Activated B cell treated with CpG ODN at 0.5 μM for 24 hours (primary cell): ENCODE measurements at regions of chr9 and their contacts with region 1.

Region 1: DNA sequence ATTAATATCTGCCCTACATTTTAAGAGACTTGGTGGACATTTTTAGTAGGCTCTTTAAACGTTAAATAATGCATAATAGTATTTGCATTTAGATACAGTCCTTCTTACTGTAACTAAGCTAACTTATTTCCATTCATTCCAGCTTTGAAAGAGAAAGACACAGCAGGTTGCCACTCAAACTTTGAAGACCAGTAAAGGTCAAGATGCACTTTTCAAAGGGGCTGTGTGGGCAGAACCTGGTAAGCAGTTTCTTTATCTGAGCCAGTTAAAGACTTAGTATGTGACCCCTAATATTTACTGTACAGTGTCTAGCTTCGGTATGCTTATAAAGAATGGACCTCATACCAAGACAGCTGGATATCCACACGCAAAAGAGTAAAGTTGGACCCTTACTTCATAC is 20.8 kb downstream of the PLGRKT start:
- DNase-seq: no peak
- ATAC-seq: no peak
- H3K4me3 Mint-ChIP-seq: no peak overlapping the region
- H3K27ac Mint-ChIP-seq: no peak overlapping the region
- H3K4me1 Mint-ChIP-seq: peaks cover 12% of the 10 kb centered on the region
- H3K27me3 Mint-ChIP-seq: no peaks in the 10 kb centered on the region
- CTCF ChIP-seq: no peak

Region 2: DNA sequence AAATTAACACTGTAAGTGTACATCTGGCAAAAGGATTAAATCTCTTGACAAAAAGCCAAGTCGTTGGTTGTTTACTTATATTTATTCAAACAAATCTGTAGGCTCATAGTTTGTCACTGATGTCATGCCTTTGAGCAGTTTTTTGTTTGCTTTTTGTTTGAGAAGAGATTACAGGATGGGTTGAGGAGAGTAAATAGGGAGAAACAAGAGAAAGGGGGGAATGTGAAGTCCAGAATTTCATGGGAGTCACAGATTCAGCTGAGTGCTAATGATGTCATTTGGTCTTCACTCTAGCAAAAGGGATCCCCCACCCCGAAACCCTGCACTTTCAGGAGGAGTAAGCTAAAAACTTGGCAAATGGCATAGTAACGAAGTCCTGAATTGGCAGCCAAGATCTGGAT is 1454.5 kb before region 1 on chr9:
- CTCF ChIA-PET with region 1: no interaction called
- POLR2A ChIA-PET with region 1: no interaction called
- intact Hi-C with region 1: no loop called
- DNase-seq: no peak
- ATAC-seq: no peak
- H3K4me3 Mint-ChIP-seq: no peak overlapping the region
- H3K27ac Mint-ChIP-seq: no peak overlapping the region
- H3K4me1 Mint-ChIP-seq: no peaks in the 10 kb centered on the region
- H3K27me3 Mint-ChIP-seq: peaks cover 10% of the 10 kb centered on the region
- CTCF ChIP-seq: no peak

Region 3: GRCh38 chr9:5305741-5306140 is 111.2 kb before region 1 on chr9:
- CTCF ChIA-PET with region 1: no interaction called
- POLR2A ChIA-PET with region 1: interaction called, 14 read pairs
- intact Hi-C with region 1: no loop called
- DNase-seq: no peak
- ATAC-seq: no peak
- H3K4me3 Mint-ChIP-seq: no peak overlapping the region
- H3K27ac Mint-ChIP-seq: no peak overlapping the region
- H3K4me1 Mint-ChIP-seq: peaks cover 11% of the 10 kb centered on the region
- H3K27me3 Mint-ChIP-seq: no peaks in the 10 kb centered on the region
- CTCF ChIP-seq: no peak